B cell (primary cell): ENCODE measurements at regions of chr10 and their contacts with region 1.

Region 1: GRCh38 chr10:102009801-102010425 is 46.1 kb downstream of the ARMH3 start:
- DNase-seq: peak; percentile 83
- ATAC-seq: peak; percentile 92
- H3K4me3 ChIP-seq: no peak overlapping the region
- H3K4me3 Mint-ChIP-seq: no peak overlapping the region
- H3K27ac ChIP-seq: peak overlapping the region in 1 of 2 donors; percentile 44
- H3K27ac Mint-ChIP-seq: peak overlapping the region; percentile 8
- H3K4me1 ChIP-seq: peaks cover 54 to 57% of the 10 kb centered on the region in 2 donors
- H3K4me1 Mint-ChIP-seq: peaks cover 46% of the 10 kb centered on the region
- H3K27me3 ChIP-seq: no peaks in the 10 kb centered on the region
- H3K27me3 Mint-ChIP-seq: no peaks in the 10 kb centered on the region
- CTCF ChIP-seq: peak; percentile 94

Region 2: GRCh38 chr10:101840741-101841453 is 169.0 kb before region 1 on chr10:
- CTCF ChIA-PET with region 1: interaction called, 581 read pairs
- POLR2A ChIA-PET with region 1: interaction called, 34 read pairs
- intact Hi-C with region 1: loop called (anchors 1 kb)
- DNase-seq: peak; percentile 88
- ATAC-seq: peak; percentile 59
- H3K4me3 ChIP-seq: peak overlapping the region in 4 of 5 experiments; percentile 44 to 79 (median 68)
- H3K4me3 Mint-ChIP-seq: peak overlapping the region; percentile 95
- H3K27ac ChIP-seq: peak overlapping the region in 1 of 2 donors; percentile 51
- H3K27ac Mint-ChIP-seq: peak overlapping the region; percentile 92
- H3K4me1 ChIP-seq: peaks cover 50 to 60% of the 10 kb centered on the region in 2 donors
- H3K4me1 Mint-ChIP-seq: peaks cover 52% of the 10 kb centered on the region
- H3K27me3 ChIP-seq: no peaks in the 10 kb centered on the region
- H3K27me3 Mint-ChIP-seq: no peaks in the 10 kb centered on the region
- CTCF ChIP-seq: peak; percentile 91

Region 3: DNA sequence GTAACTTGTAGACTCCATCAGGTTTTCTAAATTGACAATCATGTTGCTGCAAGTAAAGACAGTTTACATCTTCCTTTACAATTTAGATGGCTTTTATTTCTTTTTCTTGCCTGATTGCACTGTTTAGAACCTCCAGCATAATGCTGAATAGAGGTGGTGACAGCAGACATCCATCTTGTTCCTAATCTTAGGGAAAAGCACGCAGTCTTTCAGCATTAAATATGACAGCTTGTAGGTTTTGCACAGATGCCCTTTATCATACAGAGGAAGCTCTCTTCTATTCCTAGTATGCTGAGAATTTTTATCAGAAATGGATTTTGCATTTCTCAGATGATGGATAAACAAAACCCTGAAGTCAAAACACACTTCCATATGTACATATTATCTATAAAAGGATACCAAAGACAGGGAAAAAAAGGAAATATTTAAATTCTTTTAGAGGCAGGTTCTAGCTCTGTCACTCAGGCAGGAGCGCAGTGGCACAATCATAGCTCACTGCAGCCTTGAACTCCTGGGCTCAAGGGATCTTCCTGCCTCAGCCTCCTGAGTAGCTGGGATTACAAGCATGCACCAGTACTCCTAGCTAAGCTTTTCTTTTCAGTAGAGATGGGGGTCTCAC is 97.2 kb before region 1 on chr10:
- CTCF ChIA-PET with region 1: interaction called, 986 read pairs
- POLR2A ChIA-PET with region 1: no interaction called
- intact Hi-C with region 1: no loop called
- DNase-seq: no peak
- ATAC-seq: no peak
- H3K4me3 ChIP-seq: no peak overlapping the region
- H3K4me3 Mint-ChIP-seq: no peak overlapping the region
- H3K27ac ChIP-seq: no peak overlapping the region
- H3K27ac Mint-ChIP-seq: no peak overlapping the region
- H3K4me1 ChIP-seq: peaks cover 7 to 16% of the 10 kb centered on the region in 2 donors
- H3K4me1 Mint-ChIP-seq: peaks cover 28% of the 10 kb centered on the region
- H3K27me3 ChIP-seq: no peaks in the 10 kb centered on the region
- H3K27me3 Mint-ChIP-seq: no peaks in the 10 kb centered on the region
- CTCF ChIP-seq: no peak

Region 4: DNA sequence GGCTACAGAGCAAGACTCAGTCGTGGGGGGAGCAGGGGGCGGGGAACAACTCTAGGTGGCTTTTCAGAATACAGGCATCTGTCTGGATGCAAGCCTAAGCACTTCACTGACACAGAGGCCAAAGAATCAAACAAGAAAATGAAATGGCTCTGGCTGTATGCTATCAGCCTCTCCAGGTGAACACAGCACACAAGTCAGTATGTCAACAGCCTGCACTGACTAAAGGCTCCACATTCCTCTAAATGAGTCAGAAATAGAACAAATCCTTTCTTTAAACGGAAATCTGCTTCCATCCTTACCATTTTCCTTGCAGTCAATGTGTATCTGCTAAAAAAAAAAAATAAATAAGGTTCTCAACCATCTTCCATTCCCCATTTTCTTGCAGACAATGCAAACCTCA is 42.2 kb before region 1 on chr10:
- CTCF ChIA-PET with region 1: interaction called, 26 read pairs
- POLR2A ChIA-PET with region 1: interaction called, 3 read pairs
- intact Hi-C with region 1: no loop called
- DNase-seq: no peak
- ATAC-seq: no peak
- H3K4me3 ChIP-seq: peak overlapping the region in 1 of 5 experiments; percentile 11
- H3K4me3 Mint-ChIP-seq: peak overlapping the region; percentile 24
- H3K27ac ChIP-seq: peak overlapping the region; percentile 93 to 97
- H3K27ac Mint-ChIP-seq: peak overlapping the region; percentile 92
- H3K4me1 ChIP-seq: peaks cover 81 to 82% of the 10 kb centered on the region in 2 donors
- H3K4me1 Mint-ChIP-seq: peaks cover 80% of the 10 kb centered on the region
- H3K27me3 ChIP-seq: no peaks in the 10 kb centered on the region
- H3K27me3 Mint-ChIP-seq: no peaks in the 10 kb centered on the region
- CTCF ChIP-seq: no peak

Region 5: DNA sequence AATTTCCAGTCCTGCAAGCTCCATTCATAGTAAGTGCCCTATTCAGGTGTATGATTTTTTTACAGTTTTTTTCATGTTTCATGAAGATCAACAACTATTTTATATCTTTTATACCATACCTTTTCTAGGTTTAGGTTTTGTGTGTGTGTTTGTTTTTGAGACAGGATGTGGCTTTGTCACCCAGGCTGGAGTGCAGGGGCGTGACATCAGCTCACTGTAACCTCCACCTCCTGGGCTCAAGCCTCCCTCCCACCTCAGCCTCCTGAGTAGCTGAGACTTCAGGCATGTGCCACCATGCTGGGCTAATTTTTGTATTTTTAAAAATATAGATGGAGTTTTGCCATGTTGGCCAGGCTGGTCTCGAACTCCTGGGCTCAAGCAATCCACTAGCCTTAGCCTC is 11.0 kb after region 1 on chr10:
- CTCF ChIA-PET with region 1: interaction called, 21 read pairs
- POLR2A ChIA-PET with region 1: no interaction called
- intact Hi-C with region 1: no loop called
- DNase-seq: no peak
- ATAC-seq: no peak
- H3K4me3 ChIP-seq: no peak overlapping the region
- H3K4me3 Mint-ChIP-seq: no peak overlapping the region
- H3K27ac ChIP-seq: no peak overlapping the region
- H3K27ac Mint-ChIP-seq: no peak overlapping the region
- H3K4me1 ChIP-seq: no peaks in the 10 kb centered on the region
- H3K4me1 Mint-ChIP-seq: no peaks in the 10 kb centered on the region
- H3K27me3 ChIP-seq: no peaks in the 10 kb centered on the region
- H3K27me3 Mint-ChIP-seq: no peaks in the 10 kb centered on the region
- CTCF ChIP-seq: no peak

Region 6: GRCh38 chr10:102072673-102073527 is 63.0 kb after region 1 on chr10:
- CTCF ChIA-PET with region 1: interaction called, 12 read pairs
- POLR2A ChIA-PET with region 1: interaction called, 8 read pairs
- intact Hi-C with region 1: loop called (anchors 1 kb)
- DNase-seq: peak; percentile 84
- ATAC-seq: peak; percentile 94
- H3K4me3 ChIP-seq: no peak overlapping the region
- H3K4me3 Mint-ChIP-seq: no peak overlapping the region
- H3K27ac ChIP-seq: no peak overlapping the region
- H3K27ac Mint-ChIP-seq: no peak overlapping the region
- H3K4me1 ChIP-seq: no peaks in the 10 kb centered on the region
- H3K4me1 Mint-ChIP-seq: no peaks in the 10 kb centered on the region
- H3K27me3 ChIP-seq: no peaks in the 10 kb centered on the region
- H3K27me3 Mint-ChIP-seq: no peaks in the 10 kb centered on the region
- CTCF ChIP-seq: peak; percentile 91